ENCODE measurements at regions of chr12 and their contacts with region 1.

Region 1: GRCh38 chr12:6554168-6555017 is 1.4 kb downstream of the IFFO1 start:
- DNase-seq: peak; percentile 88
- ATAC-seq: peak; percentile 56
- H3K4me3 Mint-ChIP-seq: peak overlapping the region; percentile 84
- H3K27ac Mint-ChIP-seq: peak overlapping the region; percentile 64
- H3K4me1 Mint-ChIP-seq: peaks cover 54% of the 10 kb centered on the region
- H3K27me3 Mint-ChIP-seq: no peaks in the 10 kb centered on the region

Region 2: DNA sequence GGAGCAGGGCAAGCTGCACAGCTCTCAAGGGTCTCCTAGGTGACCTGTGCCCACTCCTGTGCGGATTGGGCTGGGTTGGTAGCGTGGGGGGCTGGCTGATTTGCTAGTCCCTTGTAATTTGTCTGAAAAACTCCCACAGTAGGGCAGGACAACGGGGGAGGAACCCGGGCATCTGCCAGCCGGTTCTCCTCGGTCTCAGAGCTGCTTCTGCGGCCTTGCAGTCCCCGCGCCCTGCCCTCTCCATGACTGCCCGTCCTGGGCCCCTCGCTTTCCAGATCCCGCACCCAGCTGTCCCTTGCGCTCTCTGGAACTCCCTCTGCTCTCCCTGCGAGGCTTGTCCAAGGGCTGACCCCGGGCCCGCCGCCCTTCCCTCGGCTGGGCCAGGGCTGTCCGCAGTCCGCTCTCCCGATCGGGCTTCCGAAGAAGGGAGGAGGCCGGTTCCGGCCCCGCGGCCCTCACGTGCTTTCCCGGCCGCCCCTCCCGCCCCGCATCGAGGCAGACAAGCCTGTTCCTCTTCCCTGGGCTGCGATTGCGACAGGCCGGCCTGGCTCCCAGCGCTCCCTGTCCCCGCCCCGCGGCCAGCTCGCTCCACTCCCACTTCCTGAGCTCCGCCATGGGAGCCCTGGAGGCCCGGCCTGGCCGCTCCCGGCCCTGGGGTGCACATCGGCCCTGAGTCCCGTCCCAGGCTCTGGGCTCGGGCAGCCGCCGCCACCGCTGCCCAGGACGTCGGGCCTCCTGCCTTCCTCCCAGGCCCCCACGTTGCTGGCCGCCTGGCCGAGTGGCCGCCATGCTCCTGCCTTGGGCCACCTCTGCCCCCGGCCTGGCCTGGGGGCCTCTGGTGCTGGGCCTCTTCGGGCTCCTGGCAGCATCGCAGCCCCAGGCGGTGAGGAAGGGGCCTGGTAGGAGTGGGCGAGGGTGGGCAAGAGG is 170.6 kb before region 1 on chr12 and contains the start of gene LTBR:
- CTCF ChIA-PET with region 1: no interaction called
- DNase-seq: no peak
- ATAC-seq: peak; percentile 23
- H3K4me3 Mint-ChIP-seq: no peak within 1 kb of the TSS
- H3K27ac Mint-ChIP-seq: no peak within 1 kb of the TSS
- H3K4me1 Mint-ChIP-seq: no peaks in the 10 kb centered on the region
- H3K27me3 Mint-ChIP-seq: peaks cover 59% of the 10 kb centered on the region
- total RNA-seq, gene LTBR: 0.30 to 0.41 TPM

Region 3: DNA sequence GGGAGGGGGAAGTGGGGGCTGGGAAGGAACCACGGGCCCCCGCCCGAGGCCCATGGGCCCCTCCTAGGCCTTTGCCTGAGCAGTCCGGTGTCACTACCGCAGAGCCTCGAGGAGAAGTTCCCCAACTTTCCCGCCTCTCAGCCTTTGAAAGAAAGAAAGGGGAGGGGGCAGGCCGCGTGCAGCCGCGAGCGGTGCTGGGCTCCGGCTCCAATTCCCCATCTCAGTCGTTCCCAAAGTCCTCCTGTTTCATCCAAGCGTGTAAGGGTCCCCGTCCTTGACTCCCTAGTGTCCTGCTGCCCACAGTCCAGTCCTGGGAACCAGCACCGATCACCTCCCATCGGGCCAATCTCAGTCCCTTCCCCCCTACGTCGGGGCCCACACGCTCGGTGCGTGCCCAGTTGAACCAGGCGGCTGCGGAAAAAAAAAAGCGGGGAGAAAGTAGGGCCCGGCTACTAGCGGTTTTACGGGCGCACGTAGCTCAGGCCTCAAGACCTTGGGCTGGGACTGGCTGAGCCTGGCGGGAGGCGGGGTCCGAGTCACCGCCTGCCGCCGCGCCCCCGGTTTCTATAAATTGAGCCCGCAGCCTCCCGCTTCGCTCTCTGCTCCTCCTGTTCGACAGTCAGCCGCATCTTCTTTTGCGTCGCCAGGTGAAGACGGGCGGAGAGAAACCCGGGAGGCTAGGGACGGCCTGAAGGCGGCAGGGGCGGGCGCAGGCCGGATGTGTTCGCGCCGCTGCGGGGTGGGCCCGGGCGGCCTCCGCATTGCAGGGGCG is 20.3 kb before region 1 on chr12 and contains the start of gene GAPDH:
- CTCF ChIA-PET with region 1: interaction called, 140 read pairs
- DNase-seq: peak; percentile 94
- ATAC-seq: peak; percentile 53
- H3K4me3 Mint-ChIP-seq: peak within 1 kb of the TSS; percentile 92
- H3K27ac Mint-ChIP-seq: peak within 1 kb of the TSS; percentile 99
- H3K4me1 Mint-ChIP-seq: peaks cover 54% of the 10 kb centered on the region
- H3K27me3 Mint-ChIP-seq: no peaks in the 10 kb centered on the region
- total RNA-seq, gene GAPDH: 5,133 to 5,396 TPM

Region 4: DNA sequence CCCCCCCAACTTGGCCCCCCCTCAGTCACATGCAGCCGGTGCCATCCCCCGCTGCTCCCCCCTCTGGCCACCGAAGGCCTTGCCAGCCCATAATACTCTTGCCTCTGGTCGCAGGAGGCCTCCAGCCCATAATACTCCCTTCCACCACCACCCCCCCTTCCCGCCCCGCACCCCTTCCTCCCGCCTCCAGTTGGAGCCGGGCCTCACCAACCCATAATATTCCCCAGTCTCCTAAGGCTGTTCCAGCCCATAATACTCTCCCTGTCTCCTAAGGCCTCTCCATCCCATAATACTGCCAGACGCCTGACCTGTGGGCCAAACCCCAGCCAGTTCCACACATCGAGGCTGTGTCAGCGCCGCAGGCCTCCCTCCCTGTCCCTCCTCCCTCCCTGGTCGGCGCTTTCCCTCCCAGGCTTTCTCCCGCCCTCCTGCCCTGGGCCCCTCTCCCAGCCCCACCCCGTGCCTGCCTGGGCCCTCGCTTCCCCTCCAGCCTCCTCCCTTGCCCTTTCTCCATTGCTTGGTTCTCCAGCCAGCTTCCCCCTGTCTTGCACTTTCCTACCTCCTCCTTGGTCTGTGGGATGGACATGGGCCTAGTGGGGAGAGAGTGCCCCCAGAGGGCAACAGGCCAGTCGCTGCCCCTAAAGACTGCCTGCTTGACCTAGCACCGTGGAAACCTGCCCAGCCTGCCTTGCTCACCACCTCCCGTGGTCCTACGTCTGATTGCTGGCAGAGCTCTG is 59.6 kb after region 1 on chr12:
- CTCF ChIA-PET with region 1: no interaction called
- DNase-seq: peak; percentile 86
- ATAC-seq: peak; percentile 46
- H3K4me3 Mint-ChIP-seq: no peak overlapping the region
- H3K27ac Mint-ChIP-seq: peak overlapping the region; percentile 70
- H3K4me1 Mint-ChIP-seq: peaks cover 42% of the 10 kb centered on the region
- H3K27me3 Mint-ChIP-seq: no peaks in the 10 kb centered on the region

Region 5: DNA sequence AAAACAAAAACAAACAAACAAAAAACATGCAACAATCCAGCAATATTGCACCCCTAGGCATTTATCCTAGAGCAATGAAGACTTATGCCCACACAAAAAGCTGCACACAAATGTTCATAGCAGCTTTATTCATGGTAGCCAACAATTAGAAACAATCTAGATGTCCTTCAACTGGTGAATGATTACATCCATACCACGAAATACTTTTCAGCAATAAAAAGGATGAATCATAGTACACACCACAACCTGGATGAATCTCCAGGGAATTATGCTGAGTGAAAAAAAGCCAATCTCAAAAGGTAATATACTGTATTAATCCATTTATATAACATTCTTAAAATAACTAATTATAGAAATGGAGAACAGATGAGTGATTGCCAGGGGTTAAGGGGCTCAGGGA is 252.8 kb after region 1 on chr12:
- CTCF ChIA-PET with region 1: no interaction called
- DNase-seq: no peak
- ATAC-seq: no peak
- H3K4me3 Mint-ChIP-seq: no peak overlapping the region
- H3K27ac Mint-ChIP-seq: no peak overlapping the region
- H3K4me1 Mint-ChIP-seq: peaks cover 6% of the 10 kb centered on the region
- H3K27me3 Mint-ChIP-seq: peaks cover 14% of the 10 kb centered on the region